ENCODE measurements at regions of chr6 and their contacts with region 1.

Region 1: DNA sequence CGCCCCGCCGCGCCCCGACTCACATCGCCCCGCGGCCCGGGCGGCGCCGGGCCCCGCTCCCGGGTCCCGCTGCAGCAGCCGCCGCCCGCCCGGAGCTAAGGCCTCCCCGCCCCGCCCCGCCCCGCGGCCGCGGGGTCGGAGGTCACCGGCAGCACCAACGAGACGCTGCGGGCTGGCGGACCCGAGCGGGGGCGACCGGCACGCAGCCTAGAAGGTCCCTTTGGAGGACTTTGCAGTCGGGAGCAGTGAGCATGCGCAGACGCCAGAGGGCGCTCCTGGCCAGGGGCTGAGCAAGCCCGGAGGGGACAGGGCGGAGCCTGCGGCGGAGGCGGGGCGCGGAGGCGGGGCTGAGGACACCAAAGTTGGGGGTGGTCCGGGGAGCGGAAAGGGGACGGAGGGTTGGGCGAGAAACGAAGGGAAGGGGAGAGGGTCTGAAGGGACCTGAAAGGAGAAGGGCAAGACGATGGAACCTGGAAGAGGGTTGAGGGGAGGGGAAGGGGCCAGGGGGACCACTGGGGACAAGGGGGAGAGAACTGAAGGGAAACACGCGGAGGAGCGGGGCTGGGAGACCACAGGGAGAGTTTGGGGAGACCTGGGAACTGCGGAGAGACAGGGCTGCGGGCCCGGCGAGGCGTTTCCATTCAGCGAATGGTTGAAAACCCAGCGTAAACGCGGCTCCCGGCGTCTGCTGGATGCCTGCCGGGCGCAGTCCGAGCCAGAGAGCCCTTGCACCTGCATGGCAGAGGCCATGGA is at the start of gene FRS3:
- DNase-seq: peak; percentile 99
- ATAC-seq: peak; percentile 97
- total RNA-seq, gene FRS3: 5.1 TPM

Region 2: DNA sequence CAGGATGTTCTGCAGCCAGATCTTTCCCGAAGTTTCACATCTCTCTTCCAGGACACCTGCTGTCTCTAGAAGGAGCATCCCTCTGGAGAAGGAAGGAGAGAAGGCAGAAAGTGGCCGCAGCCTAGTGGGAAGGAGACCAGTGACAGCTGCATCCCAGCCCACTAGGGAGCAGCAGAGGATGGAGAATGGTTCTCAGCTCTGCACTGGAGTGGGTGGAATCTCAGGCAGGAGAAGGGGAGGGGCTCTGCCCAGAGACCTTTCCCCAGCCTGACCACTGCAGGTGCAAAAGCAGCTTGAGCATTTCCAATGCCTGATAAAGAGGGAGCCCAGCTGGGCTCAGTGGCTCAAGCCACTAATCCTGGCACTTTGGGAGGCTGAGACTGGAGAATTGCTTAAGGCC is 412.3 kb before region 1 on chr6:
- intact Hi-C with region 1: loop called (anchors 5 kb)
- DNase-seq: no peak
- ATAC-seq: peak; percentile 80

Region 3: DNA sequence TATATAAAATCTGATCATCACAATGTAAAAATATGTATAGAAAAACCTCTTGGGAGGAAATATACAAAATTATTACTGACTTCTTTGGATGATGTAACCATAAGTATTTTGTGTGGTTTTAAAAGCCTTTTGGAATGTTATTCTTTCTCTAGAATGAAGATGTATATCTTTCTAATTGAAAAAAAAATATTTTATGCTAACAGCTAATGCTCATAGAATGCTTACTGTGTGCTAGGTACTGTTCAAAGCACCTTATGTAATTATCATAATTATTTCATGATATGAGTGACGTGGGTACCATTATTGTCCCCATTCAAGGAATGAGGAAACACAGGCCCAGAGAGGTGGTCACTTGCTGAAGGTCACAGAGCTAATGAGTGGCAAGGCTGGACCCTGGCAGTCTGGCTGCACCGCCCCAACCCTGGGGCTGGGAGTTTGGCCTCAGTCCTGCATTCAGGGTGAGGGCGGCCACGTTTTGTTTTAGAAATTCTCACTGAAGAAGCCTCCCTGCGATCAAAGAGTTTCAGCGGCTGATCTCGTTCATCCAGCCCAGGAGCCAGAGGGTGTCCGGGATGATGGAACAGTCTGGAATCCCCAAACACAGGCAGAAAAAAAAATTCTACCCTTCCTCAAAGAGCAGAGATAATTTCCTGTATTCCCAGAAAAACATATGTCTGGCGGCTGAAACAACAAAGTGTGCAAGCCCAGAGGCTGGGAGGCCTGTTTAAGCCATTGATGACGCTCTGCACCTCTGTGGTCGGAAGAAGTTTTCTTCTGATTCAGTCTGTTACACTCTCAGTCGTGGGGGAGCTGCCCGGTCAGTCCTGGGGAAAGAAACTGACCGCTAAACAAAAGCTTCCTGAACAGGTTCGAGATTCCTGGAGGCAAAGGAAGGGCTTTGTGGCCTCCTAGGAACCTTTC is 81.8 kb before region 1 on chr6:
- intact Hi-C with region 1: loop called (anchors 5 kb)
- DNase-seq: no peak
- ATAC-seq: no peak

Region 4: DNA sequence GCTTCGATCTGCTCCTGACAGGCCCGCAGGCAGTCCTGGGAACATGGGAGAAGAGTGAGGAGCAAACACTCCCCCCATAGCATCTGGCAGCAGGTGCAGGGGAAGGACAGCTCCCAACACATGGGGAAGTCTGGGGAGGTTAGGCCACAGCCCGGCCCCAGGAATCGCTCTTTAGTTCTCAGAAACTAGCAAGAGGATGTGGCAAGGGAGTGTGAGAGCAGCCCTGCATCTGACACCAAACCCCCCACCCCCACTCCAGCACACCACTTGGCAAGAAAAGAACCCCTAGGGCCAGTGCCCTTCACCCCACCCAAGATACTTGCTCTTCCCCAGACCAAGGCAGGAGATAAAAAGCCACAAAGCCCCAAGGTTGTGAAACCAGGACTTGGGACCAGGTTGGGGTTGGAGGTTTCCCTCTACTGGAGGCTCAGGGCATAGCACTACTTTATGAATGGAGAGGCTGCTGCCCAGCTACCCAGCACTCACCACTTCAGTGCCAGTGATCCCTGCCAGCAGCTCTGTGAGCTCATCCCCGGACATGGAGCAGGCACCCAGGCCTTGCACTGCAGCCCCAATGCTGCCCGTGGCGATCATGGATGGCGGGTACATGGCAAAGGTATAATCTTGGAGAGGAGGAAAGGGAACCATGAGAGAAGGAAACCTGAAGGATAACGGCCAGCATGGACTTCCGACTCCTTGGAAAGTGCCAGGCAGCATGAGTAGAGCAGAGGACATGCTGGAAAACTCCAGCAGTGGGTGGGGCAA is 156.3 kb after region 1 on chr6:
- intact Hi-C with region 1: loop called (anchors 1 kb)
- DNase-seq: peak; percentile 85
- ATAC-seq: peak; percentile 74

Region 5: DNA sequence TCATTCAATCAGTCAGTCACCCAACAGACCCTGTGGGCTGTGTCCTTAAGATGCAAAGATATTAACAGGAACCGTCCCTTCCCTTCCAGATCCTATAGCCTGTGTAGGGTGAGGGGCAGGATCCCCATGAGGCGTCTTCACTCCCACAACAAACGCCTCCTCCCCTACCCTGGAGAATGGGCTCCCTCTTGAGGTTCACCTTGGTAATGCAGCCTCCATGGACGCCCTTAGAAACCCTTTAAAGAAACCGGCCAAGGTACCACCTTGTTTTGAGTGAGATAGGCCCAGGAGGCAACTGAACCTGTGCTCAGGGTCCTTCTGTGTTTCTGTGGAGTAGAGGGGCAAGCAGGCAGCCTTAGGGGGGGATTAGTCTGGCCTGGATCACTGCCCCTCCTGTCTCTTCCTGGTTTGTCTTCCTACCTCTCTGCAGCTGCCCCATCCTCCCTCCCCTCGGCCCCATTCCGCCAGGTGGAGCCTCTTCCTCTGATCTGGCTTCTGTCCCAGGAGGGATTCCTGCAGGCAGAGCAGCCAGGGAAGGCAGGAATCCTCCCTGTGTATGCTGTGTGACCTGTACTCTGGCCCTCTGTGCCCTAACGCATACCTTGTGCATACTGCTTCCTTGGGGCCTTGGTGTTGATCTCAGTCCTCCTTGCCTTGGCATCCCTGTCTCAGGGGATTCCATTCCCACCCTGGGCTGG is 386.6 kb after region 1 on chr6:
- intact Hi-C with region 1: loop called (anchors 1 kb)
- DNase-seq: no peak
- ATAC-seq: peak; percentile 77